AG04450 (cell line): ENCODE measurements at regions of chr18 and their contacts with region 1.

Region 1: GRCh38 chr18:59606193-59607077 is 90.8 kb downstream of the CCBE1 start:
- DNase-seq: peak; percentile 79
- H3K4me3 ChIP-seq: no peak overlapping the region
- H3K27ac ChIP-seq: peak overlapping the region; percentile 57
- H3K27me3 ChIP-seq: no peaks in the 10 kb centered on the region
- CTCF ChIP-seq: no peak

Region 2: DNA sequence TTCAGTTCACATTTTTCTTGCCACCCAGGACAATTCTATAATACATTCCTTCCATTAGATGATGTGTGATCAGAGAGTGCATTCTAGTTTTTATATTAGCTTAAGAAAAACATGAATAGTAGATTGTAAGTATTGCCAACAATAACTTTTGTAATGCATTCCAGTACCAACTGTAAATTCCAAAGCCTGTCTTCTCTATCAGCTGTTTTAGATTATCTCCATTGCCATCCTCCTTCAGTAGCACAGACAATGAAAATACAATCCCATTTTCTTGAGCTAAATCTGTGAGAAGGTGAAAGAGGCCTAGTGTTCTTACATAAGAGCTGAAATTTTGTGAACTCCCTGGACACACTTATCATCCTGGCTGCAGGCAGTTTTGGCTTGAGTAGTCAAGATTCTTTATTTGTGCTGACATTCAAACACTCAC is 13.1 kb before region 1 on chr18:
- CTCF ChIA-PET with region 1: interaction called, 10 read pairs
- POLR2A ChIA-PET with region 1: no interaction called
- DNase-seq: peak; percentile 7
- H3K4me3 ChIP-seq: no peak overlapping the region
- H3K27ac ChIP-seq: no peak overlapping the region
- H3K27me3 ChIP-seq: no peaks in the 10 kb centered on the region
- CTCF ChIP-seq: no peak